Panc1 (cell line): ENCODE measurements at regions of chr10 and their contacts with region 1.

Region 1: DNA sequence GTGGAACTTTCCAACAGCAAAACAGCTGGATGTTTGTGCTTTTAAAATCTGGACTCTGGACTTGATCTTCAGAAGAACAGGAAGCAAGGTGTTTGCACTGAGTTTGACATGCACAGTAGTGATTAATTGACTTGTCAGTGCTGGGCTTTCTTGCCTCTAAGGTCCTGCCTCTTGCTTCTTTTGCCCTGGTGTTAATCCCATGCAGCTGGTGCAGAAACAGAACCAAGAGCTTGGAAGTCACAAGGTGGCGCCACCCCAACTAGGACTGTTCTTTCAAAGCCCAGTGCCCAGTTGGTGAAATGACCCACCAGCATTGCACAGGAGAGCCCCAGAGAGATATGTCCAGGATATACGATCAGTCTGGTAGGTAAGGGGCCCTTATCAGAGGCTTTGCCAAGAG is 66.8 kb upstream of the SEPHS1 start:
- DNase-seq: no peak
- ATAC-seq: peak; percentile 70
- H3K4me3 ChIP-seq: no peak overlapping the region
- H3K27ac ChIP-seq: no peak overlapping the region
- H3K4me1 ChIP-seq: no peaks in the 10 kb centered on the region
- H3K27me3 ChIP-seq: no peaks in the 10 kb centered on the region
- CTCF ChIP-seq: peak; percentile 55

Region 2: GRCh38 chr10:13556676-13557319 is 141.9 kb after region 1 on chr10:
- CTCF ChIA-PET with region 1: no interaction called
- POLR2A ChIA-PET with region 1: no interaction called
- in situ Hi-C with region 1: no loop called
- intact Hi-C with region 1: no loop called
- DNase-seq: no peak
- ATAC-seq: no peak
- H3K4me3 ChIP-seq: no peak overlapping the region
- H3K27ac ChIP-seq: no peak overlapping the region
- H3K4me1 ChIP-seq: no peaks in the 10 kb centered on the region
- H3K27me3 ChIP-seq: no peaks in the 10 kb centered on the region
- CTCF ChIP-seq: no peak

Region 3: DNA sequence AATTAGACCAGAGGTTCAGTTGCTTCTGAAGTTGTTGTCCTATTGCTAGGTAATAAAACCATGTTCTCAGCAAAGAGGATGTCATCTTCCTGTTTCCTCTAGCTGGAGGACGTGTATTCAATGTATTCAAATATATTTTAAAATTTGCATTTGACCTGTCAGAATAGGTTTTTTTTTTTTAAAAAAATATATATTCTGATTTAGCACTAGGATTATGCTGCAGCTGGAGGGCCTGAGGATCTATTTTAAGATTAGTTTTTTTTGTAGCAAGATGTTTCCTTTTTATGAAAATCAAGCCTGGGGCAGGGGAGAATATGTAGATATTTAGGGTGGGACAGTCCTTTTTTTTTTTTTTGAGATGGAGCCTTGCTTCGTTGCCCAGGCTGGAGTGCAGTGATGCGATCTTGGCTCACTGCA is 578.8 kb after region 1 on chr10:
- CTCF ChIA-PET with region 1: no interaction called
- POLR2A ChIA-PET with region 1: interaction called, 10 read pairs
- in situ Hi-C with region 1: no loop called
- intact Hi-C with region 1: no loop called
- DNase-seq: no peak
- ATAC-seq: no peak
- H3K4me3 ChIP-seq: no peak overlapping the region
- H3K27ac ChIP-seq: no peak overlapping the region
- H3K4me1 ChIP-seq: no peaks in the 10 kb centered on the region
- H3K27me3 ChIP-seq: no peaks in the 10 kb centered on the region
- CTCF ChIP-seq: no peak

Region 4: GRCh38 chr10:14240253-14241189 is 825.6 kb after region 1 on chr10:
- CTCF ChIA-PET with region 1: no interaction called
- POLR2A ChIA-PET with region 1: no interaction called
- in situ Hi-C with region 1: no loop called
- intact Hi-C with region 1: no loop called
- DNase-seq: no peak
- ATAC-seq: no peak
- H3K4me3 ChIP-seq: no peak overlapping the region
- H3K27ac ChIP-seq: no peak overlapping the region
- H3K4me1 ChIP-seq: no peaks in the 10 kb centered on the region
- H3K27me3 ChIP-seq: no peaks in the 10 kb centered on the region; the same call in 1 of the 2 replicates
- CTCF ChIP-seq: no peak